ENCODE measurements at regions of chr16 and their contacts with region 1.

Region 1: GRCh38 chr16:25838724-25839186 is 147.0 kb downstream of the HS3ST4 start:
- DNase-seq: peak in 6 of 14 experiments; percentile 1 to 60 (median 36)
- ATAC-seq: peak; percentile 34
- H3K4me3 ChIP-seq: no peak overlapping the region
- H3K4me3 Mint-ChIP-seq: no peak overlapping the region
- H3K27ac ChIP-seq: no peak overlapping the region
- H3K27ac Mint-ChIP-seq: no peak overlapping the region
- H3K4me1 ChIP-seq: peaks cover 5% of the 10 kb centered on the region
- H3K4me1 Mint-ChIP-seq: no peaks in the 10 kb centered on the region
- H3K27me3 ChIP-seq: peaks cover 0 to 7% of the 10 kb centered on the region in 2 experiments
- H3K27me3 Mint-ChIP-seq: peaks cover 44% of the 10 kb centered on the region
- CTCF ChIP-seq: peak; percentile 79

Region 2: DNA sequence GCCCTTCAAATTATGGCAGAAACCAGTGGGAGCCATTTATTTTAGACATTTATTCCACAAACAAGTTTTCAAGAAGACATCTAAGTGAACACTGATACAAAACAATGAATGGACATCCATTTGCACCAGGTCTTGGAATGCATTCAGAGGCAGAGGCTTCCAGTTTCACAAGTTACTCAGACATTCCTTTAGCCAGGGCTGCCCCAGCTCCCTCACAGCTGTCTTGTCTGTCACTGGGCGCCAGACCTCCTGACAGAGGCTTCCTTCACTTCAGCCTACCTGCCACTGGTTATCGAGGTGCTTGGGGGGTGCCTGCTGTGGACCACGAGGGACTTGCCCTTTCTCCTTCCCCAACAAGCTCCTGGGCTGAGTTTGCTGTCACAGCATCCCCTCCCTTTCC is 602.8 kb before region 1 on chr16:
- CTCF ChIA-PET with region 1: no interaction called
- POLR2A ChIA-PET with region 1: no interaction called
- intact Hi-C with region 1: loop called in 1 of 2 experiments (anchors 10 kb)
- DNase-seq: no peak
- ATAC-seq: no peak
- H3K4me3 ChIP-seq: no peak overlapping the region
- H3K4me3 Mint-ChIP-seq: no peak overlapping the region
- H3K27ac ChIP-seq: no peak overlapping the region
- H3K27ac Mint-ChIP-seq: no peak overlapping the region
- H3K4me1 ChIP-seq: no peaks in the 10 kb centered on the region
- H3K4me1 Mint-ChIP-seq: peaks cover 6% of the 10 kb centered on the region
- H3K27me3 ChIP-seq: no peaks in the 10 kb centered on the region
- H3K27me3 Mint-ChIP-seq: no peaks in the 10 kb centered on the region
- CTCF ChIP-seq: no peak

Region 3: DNA sequence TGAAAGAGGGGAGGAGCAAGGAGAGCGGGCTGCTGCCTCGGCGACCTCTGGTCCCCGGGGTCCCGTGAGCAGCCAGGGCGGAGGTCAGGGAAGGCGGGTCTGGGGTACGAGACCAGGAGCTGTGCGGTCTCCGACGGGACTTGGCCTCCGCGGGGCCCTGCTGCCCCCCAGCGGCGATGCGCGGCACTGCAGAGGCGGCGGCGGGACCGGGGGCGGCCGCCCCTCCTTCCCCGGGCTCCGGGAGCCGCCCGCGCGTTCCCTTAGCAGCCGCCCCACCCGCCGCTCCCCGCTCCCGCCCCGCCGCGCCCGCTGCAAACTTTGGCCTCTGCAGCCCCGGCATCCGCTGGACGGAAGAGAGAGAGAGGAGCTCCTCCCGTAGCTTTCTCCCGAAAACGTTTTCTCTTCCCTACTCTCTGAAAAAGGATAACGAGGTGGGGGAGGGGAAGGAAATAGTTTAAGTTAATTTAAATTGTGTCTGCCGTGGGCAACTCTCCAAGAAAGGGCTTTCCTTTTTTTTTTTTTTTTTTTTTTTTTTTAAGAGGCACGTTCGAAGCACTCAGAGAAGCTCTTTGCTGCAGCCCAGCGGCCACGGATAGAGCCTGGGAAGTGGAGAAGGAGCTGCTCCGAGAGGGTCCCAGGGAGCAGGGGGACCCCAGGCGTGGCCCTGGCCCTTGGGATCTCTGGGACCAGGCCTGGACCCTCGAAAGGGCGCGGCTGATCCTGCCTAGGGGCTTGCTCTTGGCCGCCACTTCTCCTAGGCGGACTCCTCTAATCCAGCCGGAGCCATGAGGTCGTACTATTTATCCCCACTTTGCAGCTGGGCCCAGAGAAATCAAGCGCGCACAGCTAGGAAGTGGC is 1271.1 kb after region 1 on chr16:
- CTCF ChIA-PET with region 1: no interaction called
- POLR2A ChIA-PET with region 1: no interaction called
- intact Hi-C with region 1: loop called in 1 of 2 experiments (anchors 5 kb)
- DNase-seq: peak; percentile 53 to 85 (median 74)
- ATAC-seq: peak; percentile 96
- H3K4me3 ChIP-seq: peak overlapping the region; percentile 41
- H3K4me3 Mint-ChIP-seq: peak overlapping the region; percentile 54
- H3K27ac ChIP-seq: no peak overlapping the region
- H3K27ac Mint-ChIP-seq: no peak overlapping the region
- H3K4me1 ChIP-seq: peaks cover 19% of the 10 kb centered on the region
- H3K4me1 Mint-ChIP-seq: no peaks in the 10 kb centered on the region
- H3K27me3 ChIP-seq: no peaks in the 10 kb centered on the region
- H3K27me3 Mint-ChIP-seq: no peaks in the 10 kb centered on the region
- CTCF ChIP-seq: peak; percentile 78

Region 4: GRCh38 chr16:27455700-27456099 is 1616.9 kb after region 1 on chr16:
- CTCF ChIA-PET with region 1: no interaction called
- POLR2A ChIA-PET with region 1: no interaction called
- intact Hi-C with region 1: loop called in 1 of 2 experiments (anchors 5 kb)
- DNase-seq: peak in 3 of 14 experiments; percentile 21 to 38 (median 38)
- ATAC-seq: peak; percentile 43
- H3K4me3 ChIP-seq: no peak overlapping the region
- H3K4me3 Mint-ChIP-seq: peak overlapping the region; percentile 38
- H3K27ac ChIP-seq: no peak overlapping the region
- H3K27ac Mint-ChIP-seq: peak overlapping the region; percentile 50
- H3K4me1 ChIP-seq: peaks cover 52% of the 10 kb centered on the region
- H3K4me1 Mint-ChIP-seq: peaks cover 63% of the 10 kb centered on the region
- H3K27me3 ChIP-seq: no peaks in the 10 kb centered on the region
- H3K27me3 Mint-ChIP-seq: no peaks in the 10 kb centered on the region
- CTCF ChIP-seq: no peak